ENCODE measurements at regions of chr6 and their contacts with region 1.

Region 1: DNA sequence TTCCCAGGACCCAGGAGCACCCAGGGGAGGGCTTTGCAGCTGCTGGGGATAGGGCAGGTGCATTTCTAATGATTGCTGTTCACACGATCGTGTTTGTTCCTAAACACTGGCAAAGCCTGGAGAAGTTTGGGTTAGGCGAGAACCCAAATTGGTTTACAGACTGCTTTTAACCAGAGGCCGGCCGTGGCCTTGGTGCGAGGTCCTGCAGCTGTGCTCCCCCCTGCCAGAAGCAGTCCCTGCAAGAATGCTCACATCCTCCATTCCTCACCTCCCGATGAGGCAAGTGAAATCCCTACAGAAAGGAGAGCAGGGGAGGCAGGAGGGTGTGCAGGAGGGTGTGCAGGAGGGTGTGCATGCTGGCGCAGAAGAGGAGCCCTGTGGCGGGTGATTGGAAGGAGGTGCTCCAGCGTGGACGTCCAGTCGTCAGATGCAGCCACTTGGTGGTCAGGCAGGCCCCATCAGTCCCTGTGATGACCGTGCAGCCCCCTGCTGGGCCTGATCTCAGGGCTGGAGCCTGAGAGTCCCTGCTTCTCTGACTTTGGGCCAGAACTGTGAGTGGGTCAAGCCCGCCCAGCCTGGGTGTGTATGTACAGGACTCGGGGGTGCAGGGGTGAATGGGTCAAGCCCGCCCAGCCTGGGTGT is 55.7 kb upstream of the FRMD1 start:
- DNase-seq: peak; percentile 65 to 93
- H3K4me3 ChIP-seq: no peak overlapping the region
- H3K27ac ChIP-seq: no peak overlapping the region
- H3K4me1 ChIP-seq: peaks cover 11% of the 10 kb centered on the region
- H3K27me3 ChIP-seq: no peaks in the 10 kb centered on the region
- CTCF ChIP-seq: no peak
- POLR2A ChIP-seq: no peak

Region 2: DNA sequence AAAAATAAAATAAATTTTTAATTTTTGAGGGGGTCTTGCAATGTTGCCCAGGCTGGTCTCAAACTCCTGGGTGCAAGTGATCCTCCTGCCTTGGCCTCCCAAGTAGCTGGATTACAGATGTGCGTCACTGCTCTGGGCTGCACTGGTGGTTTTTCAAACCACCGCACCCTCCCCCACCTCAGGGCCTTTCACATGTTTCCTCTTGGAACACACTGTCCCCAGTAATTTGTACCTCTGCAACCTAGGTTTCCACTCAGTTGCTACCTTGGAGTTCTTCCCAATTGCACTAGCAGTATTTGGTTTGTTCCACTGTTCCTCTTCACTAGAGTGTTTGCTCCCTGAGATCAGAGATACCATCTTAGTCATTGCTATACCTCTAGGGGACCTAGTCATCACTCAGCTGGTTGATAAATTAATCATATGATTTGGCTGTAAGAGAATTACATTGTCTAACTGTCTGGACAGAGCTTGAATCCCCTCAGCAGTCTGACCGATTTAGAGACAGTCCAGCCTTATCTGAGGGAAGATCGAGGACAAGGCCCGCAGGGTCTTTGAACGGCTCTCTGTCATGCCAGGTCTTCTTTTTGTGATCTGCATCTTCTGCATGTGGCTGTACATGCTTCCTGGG is 1103.5 kb before region 1 on chr6:
- intact Hi-C with region 1: loop called (anchors 5 kb)
- DNase-seq: no peak
- H3K4me3 ChIP-seq: no peak overlapping the region
- H3K27ac ChIP-seq: no peak overlapping the region
- H3K4me1 ChIP-seq: no peaks in the 10 kb centered on the region
- H3K27me3 ChIP-seq: no peaks in the 10 kb centered on the region
- CTCF ChIP-seq: no peak
- POLR2A ChIP-seq: no peak

Measured in vagina (tissue), 2 donors.